B cell (primary cell): ENCODE measurements at regions of chr2 and their contacts with region 1.

Region 1: DNA sequence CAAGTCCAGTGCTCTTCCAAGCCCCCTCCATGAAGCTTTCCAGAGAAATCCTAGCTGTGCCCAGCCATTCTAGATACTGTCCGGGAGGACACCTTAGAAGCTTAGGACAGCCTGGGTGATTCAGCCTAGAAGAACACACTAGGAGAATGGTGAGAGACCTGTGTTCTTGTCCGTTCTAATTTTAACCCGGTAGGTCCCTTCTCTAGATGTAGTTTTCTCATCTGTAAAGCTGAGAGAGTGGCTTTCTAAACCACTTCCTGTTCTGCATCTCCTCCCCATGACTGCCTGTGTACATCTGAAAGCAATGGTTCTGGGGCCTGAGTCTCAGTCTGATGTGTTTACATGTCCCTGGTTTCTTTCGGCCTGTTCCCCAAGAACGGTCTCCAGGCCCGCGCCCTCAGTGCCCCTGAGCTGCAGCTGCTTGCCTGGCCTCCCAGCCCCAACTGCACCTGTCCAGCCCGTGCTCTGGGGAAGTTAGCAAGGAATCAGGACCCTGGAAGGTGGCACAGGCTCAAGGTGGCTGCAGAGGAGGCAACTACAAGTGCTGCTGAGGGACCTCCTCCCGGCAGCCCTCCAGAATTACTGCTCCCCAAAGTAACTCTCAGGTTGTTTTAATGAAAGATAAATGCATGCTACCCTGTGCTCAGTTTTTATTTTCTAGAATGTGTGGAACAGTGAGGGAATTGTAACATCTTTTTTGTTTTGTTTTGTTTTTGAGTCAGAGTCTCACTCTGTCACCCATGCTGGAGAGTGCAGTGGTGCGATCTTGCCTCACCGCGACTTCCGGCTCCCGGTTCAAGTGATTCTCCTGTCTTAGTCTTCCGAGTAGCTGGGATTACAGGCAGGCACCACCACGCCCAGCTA is 105.9 kb downstream of the LBH start:
- DNase-seq: peak; percentile 80
- ATAC-seq: peak; percentile 89
- H3K4me3 ChIP-seq: peak overlapping the region; percentile 29 to 62 (median 42)
- H3K4me3 Mint-ChIP-seq: peak overlapping the region; percentile 81
- H3K27ac ChIP-seq: peak overlapping the region; percentile 89 to 90
- H3K27ac Mint-ChIP-seq: peak overlapping the region; percentile 99
- H3K4me1 ChIP-seq: peaks cover 93 to 94% of the 10 kb centered on the region in 2 donors
- H3K4me1 Mint-ChIP-seq: peaks cover 92% of the 10 kb centered on the region
- H3K27me3 ChIP-seq: no peaks in the 10 kb centered on the region
- H3K27me3 Mint-ChIP-seq: no peaks in the 10 kb centered on the region
- CTCF ChIP-seq: no peak

Region 2: GRCh38 chr2:30146438-30147147 is 190.6 kb before region 1 on chr2 and contains the start of gene YPEL5:
- CTCF ChIA-PET with region 1: interaction called, 4 read pairs
- POLR2A ChIA-PET with region 1: interaction called, 5 read pairs
- intact Hi-C with region 1: loop called (anchors 5 kb)
- DNase-seq: peak; percentile 100
- ATAC-seq: peak; percentile 81
- H3K4me3 ChIP-seq: peak within 1 kb of the TSS; percentile 87 to 98 (median 94)
- H3K4me3 Mint-ChIP-seq: peak within 1 kb of the TSS; percentile 90
- H3K27ac ChIP-seq: peak within 1 kb of the TSS; percentile 99
- H3K27ac Mint-ChIP-seq: peak within 1 kb of the TSS; percentile 100
- H3K4me1 ChIP-seq: peaks cover 38 to 46% of the 10 kb centered on the region in 2 donors
- H3K4me1 Mint-ChIP-seq: peaks cover 45% of the 10 kb centered on the region
- H3K27me3 ChIP-seq: no peaks in the 10 kb centered on the region
- H3K27me3 Mint-ChIP-seq: no peaks in the 10 kb centered on the region
- CTCF ChIP-seq: no peak
- total RNA-seq, gene YPEL5: 115 and 117 TPM in 2 replicates

Region 3: GRCh38 chr2:30231212-30231995 is 105.8 kb before region 1 on chr2 and contains the start of gene LBH:
- CTCF ChIA-PET with region 1: interaction called, 55 read pairs
- POLR2A ChIA-PET with region 1: interaction called, 22 read pairs
- intact Hi-C with region 1: loop called (anchors 1 kb)
- DNase-seq: peak; percentile 97
- ATAC-seq: peak; percentile 56
- H3K4me3 ChIP-seq: peak within 1 kb of the TSS; percentile 84 to 94 (median 93)
- H3K4me3 Mint-ChIP-seq: peak within 1 kb of the TSS; percentile 80
- H3K27ac ChIP-seq: peak within 1 kb of the TSS; percentile 93 to 94
- H3K27ac Mint-ChIP-seq: peak within 1 kb of the TSS; percentile 98
- H3K4me1 ChIP-seq: peaks cover 38 to 48% of the 10 kb centered on the region in 2 donors
- H3K4me1 Mint-ChIP-seq: peaks cover 47% of the 10 kb centered on the region
- H3K27me3 ChIP-seq: no peaks in the 10 kb centered on the region
- H3K27me3 Mint-ChIP-seq: no peaks in the 10 kb centered on the region
- CTCF ChIP-seq: no peak
- total RNA-seq, gene LBH: 197 and 201 TPM in 2 replicates

Region 4: GRCh38 chr2:30282086-30282485 is 55.1 kb before region 1 on chr2:
- CTCF ChIA-PET with region 1: interaction called, 22 read pairs
- POLR2A ChIA-PET with region 1: interaction called, 4 read pairs
- intact Hi-C with region 1: loop called (anchors 1 kb)
- DNase-seq: peak; percentile 89
- ATAC-seq: peak; percentile 98
- H3K4me3 ChIP-seq: peak overlapping the region in 2 of 5 experiments; percentile 11 to 40
- H3K4me3 Mint-ChIP-seq: peak overlapping the region; percentile 66
- H3K27ac ChIP-seq: peak overlapping the region; percentile 75 to 88
- H3K27ac Mint-ChIP-seq: peak overlapping the region; percentile 92
- H3K4me1 ChIP-seq: peaks cover 89 to 94% of the 10 kb centered on the region in 2 donors
- H3K4me1 Mint-ChIP-seq: peaks cover 91% of the 10 kb centered on the region
- H3K27me3 ChIP-seq: no peaks in the 10 kb centered on the region
- H3K27me3 Mint-ChIP-seq: no peaks in the 10 kb centered on the region
- CTCF ChIP-seq: no peak

Region 5: GRCh38 chr2:30421604-30422443 is 84.6 kb after region 1 on chr2:
- CTCF ChIA-PET with region 1: interaction called, 24 read pairs
- POLR2A ChIA-PET with region 1: interaction called, 4 read pairs
- intact Hi-C with region 1: loop called (anchors 5 kb)
- DNase-seq: peak; percentile 19
- ATAC-seq: peak; percentile 59
- H3K4me3 ChIP-seq: peak overlapping the region in 1 of 5 experiments; percentile 41
- H3K4me3 Mint-ChIP-seq: peak overlapping the region; percentile 64
- H3K27ac ChIP-seq: peak overlapping the region; percentile 64 to 81
- H3K27ac Mint-ChIP-seq: peak overlapping the region; percentile 82
- H3K4me1 ChIP-seq: peaks cover 28 to 32% of the 10 kb centered on the region in 2 donors
- H3K4me1 Mint-ChIP-seq: peaks cover 31% of the 10 kb centered on the region
- H3K27me3 ChIP-seq: no peaks in the 10 kb centered on the region
- H3K27me3 Mint-ChIP-seq: no peaks in the 10 kb centered on the region
- CTCF ChIP-seq: no peak

Region 6: DNA sequence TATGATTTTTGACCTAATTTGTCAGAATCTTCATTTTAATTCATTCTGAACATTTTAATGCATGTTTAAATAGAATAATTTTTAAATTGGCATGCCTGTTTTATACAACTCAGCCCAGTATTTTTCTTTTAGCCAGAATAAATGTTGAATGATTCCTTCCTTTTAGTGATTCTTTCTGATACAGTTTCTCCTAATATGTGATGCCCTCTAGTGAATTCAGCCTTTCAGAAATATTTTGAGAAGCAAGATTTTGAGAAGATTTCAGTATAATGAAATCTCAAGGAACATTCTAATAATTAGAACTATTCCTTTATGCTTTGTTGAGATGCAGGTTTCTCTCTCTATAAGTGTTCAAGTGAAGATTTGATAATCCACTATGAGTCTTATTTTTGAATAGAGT is 138.3 kb after region 1 on chr2:
- CTCF ChIA-PET with region 1: interaction called, 19 read pairs
- POLR2A ChIA-PET with region 1: no interaction called
- intact Hi-C with region 1: no loop called
- DNase-seq: no peak
- ATAC-seq: no peak
- H3K4me3 ChIP-seq: no peak overlapping the region
- H3K4me3 Mint-ChIP-seq: no peak overlapping the region
- H3K27ac ChIP-seq: no peak overlapping the region
- H3K27ac Mint-ChIP-seq: no peak overlapping the region
- H3K4me1 ChIP-seq: peaks cover 8 to 17% of the 10 kb centered on the region in 2 donors
- H3K4me1 Mint-ChIP-seq: peaks cover 38% of the 10 kb centered on the region
- H3K27me3 ChIP-seq: no peaks in the 10 kb centered on the region
- H3K27me3 Mint-ChIP-seq: no peaks in the 10 kb centered on the region
- CTCF ChIP-seq: no peak